GM12878 (cell line): ENCODE measurements at regions of chr3 and their contacts with region 1.

Region 1: DNA sequence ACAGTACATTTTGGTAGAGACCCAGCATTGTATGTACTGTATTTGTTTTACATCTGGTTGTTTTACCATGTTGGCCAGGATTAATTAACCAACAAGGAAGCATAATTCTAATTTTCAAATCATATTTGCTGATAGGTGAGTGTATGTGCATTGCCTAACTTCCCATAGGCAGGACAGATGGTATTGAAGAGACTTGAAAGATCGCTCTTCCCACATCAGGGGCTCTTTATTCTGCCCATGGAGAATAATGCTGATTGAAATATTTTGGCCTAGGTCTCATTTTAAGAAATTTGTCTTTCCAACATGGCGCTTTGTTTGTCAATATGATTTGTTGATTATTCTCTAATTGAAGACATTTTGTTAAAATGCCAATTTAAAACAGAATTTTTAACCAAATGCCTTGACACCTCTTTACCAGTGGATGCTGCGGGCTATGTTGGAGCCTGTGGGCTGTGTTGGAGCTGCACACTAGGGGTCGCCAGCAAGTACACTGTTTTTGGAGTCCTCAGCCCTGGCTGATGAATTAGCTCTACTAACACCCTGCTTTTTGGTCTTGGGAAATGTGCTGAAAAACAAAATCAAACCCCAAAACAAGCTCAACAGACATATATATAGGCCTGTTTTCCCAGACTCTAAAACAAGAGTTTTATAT is 5.3 kb downstream of the P2RY12 start:
- DNase-seq: no peak
- ATAC-seq: peak; percentile 82
- H3K4me3 ChIP-seq: no peak overlapping the region
- H3K27ac ChIP-seq: no peak overlapping the region
- H3K4me1 ChIP-seq: peaks cover 17% of the 10 kb centered on the region; the same call in 1 of the 2 replicates
- H3K27me3 ChIP-seq: no peaks in the 10 kb centered on the region
- CTCF ChIP-seq: peak; percentile 61 to 86 (median 69)
- EP300 ChIP-seq: no peak
- POLR2A ChIP-seq: no peak
- RAD21 ChIP-seq: peak; percentile 59

Region 2: GRCh38 chr3:151425627-151426335 is 46.6 kb after region 1 on chr3:
- CTCF ChIA-PET with region 1: interaction called, 15 read pairs
- POLR2A ChIA-PET with region 1: no interaction called
- RAD21 ChIA-PET with region 1: no interaction called
- SMC1A ChIA-PET with region 1: interaction called, 3 read pairs
- in situ Hi-C with region 1: no loop called
- intact Hi-C with region 1: loop called (anchors 2 kb)
- DNase-seq: no peak
- ATAC-seq: peak; percentile 61
- H3K4me3 ChIP-seq: no peak overlapping the region
- H3K27ac ChIP-seq: no peak overlapping the region
- H3K4me1 ChIP-seq: no peaks in the 10 kb centered on the region; the same call in 1 of the 2 replicates
- H3K27me3 ChIP-seq: no peaks in the 10 kb centered on the region
- CTCF ChIP-seq: peak in 1 of 3 experiments; percentile 32; a peak in 3 of 6 replicates
- EP300 ChIP-seq: no peak
- POLR2A ChIP-seq: no peak
- RAD21 ChIP-seq: 0 out of 2 replicates have a peak, but pooled peaks have one; percentile 18

Region 3: DNA sequence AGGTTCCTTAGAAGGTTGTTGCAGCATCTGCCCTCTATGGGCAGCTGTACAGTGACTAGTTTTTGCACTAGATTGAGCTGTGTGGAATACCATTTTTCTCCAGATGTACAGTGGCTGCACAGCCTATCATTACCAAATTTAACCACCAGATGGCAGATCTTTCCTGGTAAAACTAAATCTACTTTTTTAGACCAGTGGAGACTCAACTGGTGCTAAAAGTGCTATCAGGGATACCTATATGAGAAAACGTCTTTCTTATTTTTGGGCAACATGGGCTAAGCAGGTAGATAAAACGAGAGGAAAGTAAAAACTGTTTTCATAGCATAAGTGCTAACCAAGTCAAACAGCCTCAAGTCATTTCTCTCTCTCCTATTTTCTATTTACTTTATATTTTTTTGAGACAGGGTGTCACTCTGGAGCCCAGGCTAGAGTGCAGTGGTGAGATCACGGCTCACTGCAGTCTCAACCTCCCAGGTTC is 60.5 kb after region 1 on chr3:
- CTCF ChIA-PET with region 1: interaction called, 19 read pairs
- POLR2A ChIA-PET with region 1: no interaction called
- RAD21 ChIA-PET with region 1: interaction called, 5 read pairs
- SMC1A ChIA-PET with region 1: interaction called, 7 read pairs
- in situ Hi-C with region 1: no loop called
- intact Hi-C with region 1: no loop called
- DNase-seq: no peak
- ATAC-seq: peak; percentile 92
- H3K4me3 ChIP-seq: no peak overlapping the region
- H3K27ac ChIP-seq: no peak overlapping the region
- H3K4me1 ChIP-seq: no peaks in the 10 kb centered on the region
- H3K27me3 ChIP-seq: no peaks in the 10 kb centered on the region
- CTCF ChIP-seq: peak; percentile 63 to 70 (median 70)
- EP300 ChIP-seq: no peak
- POLR2A ChIP-seq: no peak
- RAD21 ChIP-seq: peak; percentile 68